ENCODE measurements at regions of chr16 and their contacts with region 1.

Region 1: GRCh38 chr16:15888072-15888976 is at the start of gene CEP20:
- DNase-seq: peak; percentile 100
- H3K4me3 Mint-ChIP-seq: peak within 1 kb of the TSS; percentile 99
- H3K27ac Mint-ChIP-seq: peak within 1 kb of the TSS; percentile 94
- H3K4me1 Mint-ChIP-seq: peaks cover 27% of the 10 kb centered on the region
- H3K27me3 Mint-ChIP-seq: no peaks in the 10 kb centered on the region
- total RNA-seq, gene CEP20: 40.0 to 43.8 TPM

Region 2: GRCh38 chr16:15874745-15875314 is 13.5 kb before region 1 on chr16:
- CTCF ChIA-PET with region 1: interaction called, 19 read pairs
- POLR2A ChIA-PET with region 1: no interaction called
- intact Hi-C with region 1: no loop called
- DNase-seq: no peak
- H3K4me3 Mint-ChIP-seq: no peak overlapping the region
- H3K27ac Mint-ChIP-seq: no peak overlapping the region
- H3K4me1 Mint-ChIP-seq: peaks cover 8% of the 10 kb centered on the region
- H3K27me3 Mint-ChIP-seq: no peaks in the 10 kb centered on the region

Region 3: DNA sequence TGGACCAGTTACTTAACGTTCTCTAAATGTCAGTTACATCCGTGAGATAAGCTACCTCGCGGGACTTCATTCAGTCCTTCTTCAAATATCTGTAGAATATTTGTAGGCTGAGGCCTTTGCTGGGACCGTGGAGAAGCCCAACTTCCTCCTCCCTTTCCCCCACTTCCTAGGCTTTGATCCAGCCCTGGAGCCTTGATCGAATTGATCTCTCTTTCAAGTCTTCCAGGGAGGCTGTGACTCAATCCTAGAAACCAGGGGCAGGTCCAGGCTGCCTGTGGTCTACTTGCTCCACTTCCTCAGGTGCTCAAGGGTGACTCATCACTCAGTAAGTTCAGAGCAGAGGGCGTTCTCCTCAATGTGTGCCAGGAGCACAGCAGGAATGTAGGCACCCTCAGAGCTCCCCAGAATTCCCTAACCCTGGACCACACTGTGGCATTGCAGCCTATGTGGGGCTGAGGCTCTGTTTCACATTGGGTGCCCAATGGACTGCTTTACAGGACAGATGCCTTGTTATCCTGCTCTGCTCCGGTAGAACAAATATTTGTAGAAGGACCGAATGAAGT is 11.3 kb after region 1 on chr16:
- CTCF ChIA-PET with region 1: interaction called, 15 read pairs
- POLR2A ChIA-PET with region 1: interaction called, 10 read pairs
- intact Hi-C with region 1: loop called (anchors 1 kb)
- DNase-seq: peak; percentile 80
- H3K4me3 Mint-ChIP-seq: no peak overlapping the region
- H3K27ac Mint-ChIP-seq: no peak overlapping the region
- H3K4me1 Mint-ChIP-seq: peaks cover 28% of the 10 kb centered on the region
- H3K27me3 Mint-ChIP-seq: no peaks in the 10 kb centered on the region

Region 4: GRCh38 chr16:15949210-15950160 is 61.2 kb after region 1 on chr16 and contains the start of gene ABCC1:
- CTCF ChIA-PET with region 1: interaction called, 3 read pairs
- POLR2A ChIA-PET with region 1: interaction called, 16 read pairs
- intact Hi-C with region 1: no loop called
- DNase-seq: peak; percentile 60
- H3K4me3 Mint-ChIP-seq: peak within 1 kb of the TSS; percentile 99
- H3K27ac Mint-ChIP-seq: peak within 1 kb of the TSS; percentile 96
- H3K4me1 Mint-ChIP-seq: peaks cover 50% of the 10 kb centered on the region
- H3K27me3 Mint-ChIP-seq: no peaks in the 10 kb centered on the region
- total RNA-seq, gene ABCC1: 49.1 to 50.3 TPM

Region 5: DNA sequence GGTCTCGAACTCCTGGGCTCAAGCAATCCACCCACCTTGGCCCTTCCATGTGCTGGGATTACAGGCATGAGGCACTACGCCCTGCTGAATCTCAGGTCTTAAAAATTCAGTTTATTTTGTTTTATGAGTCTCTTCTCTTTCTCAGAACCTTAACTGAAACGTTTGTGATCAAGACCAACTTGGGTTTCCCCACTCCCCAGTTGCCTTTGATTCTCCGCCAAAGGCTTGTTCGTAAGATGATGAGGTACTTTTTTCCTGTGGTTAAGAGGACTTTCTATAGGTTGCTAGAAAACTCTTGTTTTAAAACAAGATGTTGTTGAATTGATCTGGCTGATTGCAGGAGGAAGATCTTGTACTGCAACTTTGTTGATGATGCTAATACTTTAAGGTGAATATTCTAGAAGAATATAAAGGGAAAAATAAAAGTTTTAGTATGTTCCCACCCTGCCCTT is 72.8 kb after region 1 on chr16:
- CTCF ChIA-PET with region 1: interaction called, 3 read pairs
- POLR2A ChIA-PET with region 1: interaction called, 6 read pairs
- intact Hi-C with region 1: loop called (anchors 2 kb)
- DNase-seq: peak; percentile 86
- H3K4me3 Mint-ChIP-seq: peak overlapping the region; percentile 78
- H3K27ac Mint-ChIP-seq: peak overlapping the region; percentile 100
- H3K4me1 Mint-ChIP-seq: peaks cover 84% of the 10 kb centered on the region
- H3K27me3 Mint-ChIP-seq: no peaks in the 10 kb centered on the region

Region 6: DNA sequence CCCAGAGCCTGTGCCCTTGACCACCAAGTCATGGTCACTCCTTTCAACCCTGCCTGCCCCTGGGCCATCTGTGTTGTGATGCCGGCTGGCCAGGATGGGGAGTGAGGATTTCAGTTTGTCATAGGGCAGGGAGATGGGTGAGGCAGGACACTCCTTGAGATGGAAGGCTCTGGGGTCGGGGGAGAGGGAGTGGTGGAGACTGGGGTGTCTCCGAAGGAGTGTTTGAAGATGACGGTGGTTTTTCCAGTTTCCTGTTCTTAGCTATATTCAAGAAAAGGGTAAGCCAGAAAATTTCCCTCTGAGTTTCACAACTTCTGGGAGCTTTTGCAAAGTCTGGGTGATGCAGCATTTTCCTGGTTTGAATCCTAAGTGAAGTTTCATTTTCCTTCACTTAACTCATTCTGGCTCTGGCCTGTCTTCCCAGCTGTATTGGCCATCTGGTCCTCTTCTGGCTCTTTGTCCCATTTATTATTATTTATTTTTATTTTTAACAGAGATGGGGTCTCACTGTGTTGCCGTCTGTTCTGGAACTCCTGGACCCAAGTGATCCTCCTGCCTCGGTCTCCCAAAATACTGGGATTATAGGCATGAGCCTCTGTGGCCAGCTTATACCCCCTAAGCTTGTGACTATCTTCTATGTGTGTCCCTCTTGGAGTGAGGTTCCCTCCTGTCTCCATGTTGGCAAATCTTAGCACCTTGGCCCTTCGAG is 88.8 kb after region 1 on chr16:
- CTCF ChIA-PET with region 1: no interaction called
- POLR2A ChIA-PET with region 1: no interaction called
- intact Hi-C with region 1: no loop called
- DNase-seq: no peak
- H3K4me3 Mint-ChIP-seq: no peak overlapping the region
- H3K27ac Mint-ChIP-seq: peak overlapping the region; percentile 47
- H3K4me1 Mint-ChIP-seq: peaks cover 37% of the 10 kb centered on the region
- H3K27me3 Mint-ChIP-seq: no peaks in the 10 kb centered on the region

Region 7: GRCh38 chr16:16025214-16025968 is 137.1 kb after region 1 on chr16:
- CTCF ChIA-PET with region 1: no interaction called
- POLR2A ChIA-PET with region 1: interaction called, 4 read pairs
- intact Hi-C with region 1: loop called (anchors 2 kb)
- DNase-seq: peak; percentile 86
- H3K4me3 Mint-ChIP-seq: peak overlapping the region; percentile 52
- H3K27ac Mint-ChIP-seq: peak overlapping the region; percentile 97
- H3K4me1 Mint-ChIP-seq: peaks cover 37% of the 10 kb centered on the region
- H3K27me3 Mint-ChIP-seq: no peaks in the 10 kb centered on the region

Region 8: DNA sequence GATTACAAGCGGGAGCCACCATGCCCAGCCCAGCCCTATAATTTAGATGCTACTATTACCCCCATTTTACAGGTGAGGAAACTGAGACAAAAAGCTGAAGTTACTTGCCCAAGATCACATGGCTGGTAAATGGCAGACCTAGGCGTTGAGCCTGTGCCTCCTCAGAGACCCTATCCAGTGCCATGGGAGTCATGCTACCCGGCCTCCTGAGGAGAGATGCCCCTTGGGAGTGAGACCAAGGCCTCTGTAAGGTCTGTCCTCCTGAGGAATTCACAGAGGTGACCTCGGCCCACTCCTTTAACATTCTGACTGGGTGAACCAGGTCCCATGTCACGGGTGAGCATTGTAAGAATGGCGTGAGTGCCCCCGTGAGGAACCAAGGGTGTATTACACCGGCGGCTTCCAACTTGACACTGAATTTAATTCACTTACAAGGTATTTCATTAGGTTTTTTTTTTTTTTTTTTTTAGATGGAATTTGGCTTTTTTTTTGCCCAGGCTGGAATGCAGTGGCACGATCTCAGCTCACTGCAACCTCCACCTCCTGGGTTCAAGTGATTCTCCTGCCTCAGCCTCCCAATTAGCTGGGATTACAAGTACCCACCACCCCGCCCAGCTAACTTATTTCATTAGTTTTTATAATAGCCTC is 239.3 kb after region 1 on chr16:
- CTCF ChIA-PET with region 1: interaction called, 8 read pairs
- POLR2A ChIA-PET with region 1: no interaction called
- intact Hi-C with region 1: loop called (anchors 5 kb)
- DNase-seq: peak; percentile 80
- H3K4me3 Mint-ChIP-seq: no peak overlapping the region
- H3K27ac Mint-ChIP-seq: no peak overlapping the region
- H3K4me1 Mint-ChIP-seq: no peaks in the 10 kb centered on the region
- H3K27me3 Mint-ChIP-seq: no peaks in the 10 kb centered on the region

Measured in activated CD4-positive, alpha-beta memory T cell treated with anti-CD3 and anti-CD28 coated beads for 36 hours (primary cell).